Mammary epithelial cell (primary cell): ENCODE measurements at regions of chr15 and their contacts with region 1.

Region 1: DNA sequence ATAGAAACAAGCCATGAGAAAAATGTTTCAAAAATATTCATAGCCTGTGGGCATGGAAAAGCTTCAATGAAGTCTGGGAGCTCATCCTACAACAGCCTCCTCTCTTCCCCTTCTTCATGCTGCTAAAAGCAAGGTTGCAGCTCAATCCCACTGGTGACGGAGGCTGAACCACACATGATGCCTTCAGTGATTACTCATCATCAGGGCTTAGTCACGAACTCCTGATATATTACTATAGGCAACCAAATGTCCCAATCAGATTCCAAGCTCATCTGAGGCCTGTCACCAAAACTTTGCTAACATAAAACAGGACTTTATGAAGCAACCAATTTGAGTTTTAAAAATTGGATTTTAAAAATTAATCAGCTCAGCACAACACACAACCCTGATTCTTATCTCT is 24.0 kb upstream of the SLC24A5 start:
- DNase-seq: peak; percentile 80
- H3K4me3 ChIP-seq: no peak overlapping the region
- H3K27ac ChIP-seq: no peak overlapping the region
- H3K4me1 ChIP-seq: peaks cover 7% of the 10 kb centered on the region
- H3K27me3 ChIP-seq: no peaks in the 10 kb centered on the region
- CTCF ChIP-seq: no peak

Region 2: GRCh38 chr15:48617619-48618018 is 520.8 kb after region 1 on chr15:
- CTCF ChIA-PET with region 1: no interaction called
- dilution Hi-C with region 1: no loop called
- in situ Hi-C with region 1: no loop called
- intact Hi-C with region 1: loop called (anchors 10 kb)
- DNase-seq: no peak
- H3K4me3 ChIP-seq: no peak overlapping the region
- H3K27ac ChIP-seq: no peak overlapping the region
- H3K4me1 ChIP-seq: no peaks in the 10 kb centered on the region
- H3K27me3 ChIP-seq: no peaks in the 10 kb centered on the region
- CTCF ChIP-seq: no peak